ENCODE measurements at regions of chr1 and their contacts with region 1.

Region 1: GRCh38 chr1:21659099-21659923 is 9.8 kb downstream of the RAP1GAP start:
- DNase-seq: peak; percentile 40 to 81
- H3K4me3 ChIP-seq: no peak overlapping the region
- H3K27ac ChIP-seq: no peak overlapping the region
- H3K4me1 ChIP-seq: peaks cover 15% of the 10 kb centered on the region
- H3K27me3 ChIP-seq: no peaks in the 10 kb centered on the region
- CTCF ChIP-seq: peak; percentile 89

Region 2: DNA sequence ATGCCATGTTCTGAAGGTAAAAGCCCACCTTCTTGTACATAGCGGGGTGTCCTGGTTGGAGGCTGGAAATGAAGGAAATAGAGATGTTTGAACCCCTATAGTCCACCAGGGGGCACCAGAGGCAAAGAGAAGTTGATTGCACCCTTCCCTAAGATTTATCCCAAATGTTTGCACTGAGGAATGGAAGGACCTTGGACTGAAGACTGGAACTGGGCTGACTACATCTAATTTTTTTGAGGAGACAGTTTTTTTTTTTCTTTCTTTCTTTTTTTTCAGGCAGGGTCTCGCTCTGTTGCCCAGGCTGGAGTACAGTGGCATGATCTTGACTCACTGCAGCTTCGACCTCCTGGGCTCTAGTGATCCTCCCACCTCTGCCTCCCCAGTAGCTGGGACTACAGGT is 427.3 kb before region 1 on chr1:
- CTCF ChIA-PET with region 1: no interaction called
- POLR2A ChIA-PET with region 1: no interaction called
- intact Hi-C with region 1: loop called (anchors 5 kb)
- DNase-seq: peak in 1 of 2 experiments; percentile 27
- H3K4me3 ChIP-seq: no peak overlapping the region
- H3K27ac ChIP-seq: no peak overlapping the region
- H3K4me1 ChIP-seq: no peaks in the 10 kb centered on the region
- H3K27me3 ChIP-seq: no peaks in the 10 kb centered on the region
- CTCF ChIP-seq: peak; percentile 79

Region 3: DNA sequence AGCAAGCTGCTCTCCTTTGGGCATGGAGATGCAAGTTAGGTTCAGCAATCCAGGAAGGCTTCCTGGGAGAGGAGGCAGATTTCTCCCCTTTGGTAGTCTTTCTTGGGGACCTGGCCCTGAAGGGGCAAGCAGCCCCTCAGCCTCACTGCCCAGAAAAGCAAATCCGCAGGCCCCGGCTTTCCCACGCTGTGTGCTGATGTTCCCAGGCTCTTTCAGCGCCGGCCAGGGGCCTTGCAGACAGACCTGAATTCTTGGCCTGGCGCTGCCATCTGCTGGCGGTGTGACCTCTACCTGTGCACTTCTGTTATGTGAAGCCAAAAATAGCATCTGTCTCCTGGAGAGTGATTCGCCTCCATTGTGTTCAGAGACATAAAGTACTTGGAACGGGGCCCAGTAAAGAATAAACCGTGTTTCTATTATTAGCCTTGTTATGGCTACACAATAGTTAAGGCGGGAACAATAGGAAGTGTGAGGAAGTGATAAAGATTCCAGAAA is 85.3 kb before region 1 on chr1:
- CTCF ChIA-PET with region 1: interaction called, 14 read pairs
- POLR2A ChIA-PET with region 1: no interaction called
- intact Hi-C with region 1: loop called (anchors 1 kb)
- DNase-seq: peak; percentile 42 to 68
- H3K4me3 ChIP-seq: no peak overlapping the region
- H3K27ac ChIP-seq: no peak overlapping the region
- H3K4me1 ChIP-seq: no peaks in the 10 kb centered on the region
- H3K27me3 ChIP-seq: no peaks in the 10 kb centered on the region
- CTCF ChIP-seq: peak; percentile 63

Region 4: DNA sequence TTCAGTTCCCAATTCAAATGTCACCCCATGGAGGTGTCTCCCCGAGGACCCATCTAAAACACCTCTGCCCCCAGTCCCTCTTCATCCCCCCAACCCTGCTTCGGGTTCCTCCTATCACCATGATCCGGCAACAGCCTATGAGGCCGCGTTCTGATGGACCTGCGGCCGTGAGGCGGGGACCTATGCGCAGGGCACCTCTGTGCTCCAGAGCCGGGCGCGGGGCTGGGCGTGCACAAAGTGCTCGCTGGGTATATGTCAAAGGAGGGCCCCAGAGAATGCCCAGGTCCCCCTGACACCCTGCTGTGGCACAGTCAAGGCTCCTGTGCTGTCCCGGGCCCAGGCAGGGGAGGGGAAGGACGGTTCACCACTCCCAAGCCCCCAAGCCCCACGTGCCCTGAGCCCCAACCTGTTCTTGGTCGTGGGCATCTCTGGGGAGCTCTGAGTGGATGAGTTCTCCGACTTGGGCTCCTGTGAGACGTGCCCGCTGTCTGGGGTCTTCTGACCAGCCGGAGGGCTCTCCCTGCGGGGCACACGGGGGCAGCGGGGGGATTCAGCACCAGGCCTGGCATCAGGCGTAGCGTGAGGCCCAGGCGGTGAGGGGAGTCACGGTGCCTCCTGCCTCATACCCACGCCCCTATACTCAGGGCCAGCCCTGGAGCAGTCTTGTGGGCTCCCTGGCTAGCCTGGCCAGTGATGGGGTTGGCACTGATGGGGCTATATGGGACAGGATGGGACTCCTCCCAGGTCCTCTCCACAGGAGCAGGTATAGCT is 57.8 kb before region 1 on chr1:
- CTCF ChIA-PET with region 1: no interaction called
- POLR2A ChIA-PET with region 1: no interaction called
- intact Hi-C with region 1: no loop called
- DNase-seq: no peak
- H3K4me3 ChIP-seq: no peak overlapping the region
- H3K27ac ChIP-seq: no peak overlapping the region
- H3K4me1 ChIP-seq: no peaks in the 10 kb centered on the region
- H3K27me3 ChIP-seq: no peaks in the 10 kb centered on the region
- CTCF ChIP-seq: no peak

Region 5: DNA sequence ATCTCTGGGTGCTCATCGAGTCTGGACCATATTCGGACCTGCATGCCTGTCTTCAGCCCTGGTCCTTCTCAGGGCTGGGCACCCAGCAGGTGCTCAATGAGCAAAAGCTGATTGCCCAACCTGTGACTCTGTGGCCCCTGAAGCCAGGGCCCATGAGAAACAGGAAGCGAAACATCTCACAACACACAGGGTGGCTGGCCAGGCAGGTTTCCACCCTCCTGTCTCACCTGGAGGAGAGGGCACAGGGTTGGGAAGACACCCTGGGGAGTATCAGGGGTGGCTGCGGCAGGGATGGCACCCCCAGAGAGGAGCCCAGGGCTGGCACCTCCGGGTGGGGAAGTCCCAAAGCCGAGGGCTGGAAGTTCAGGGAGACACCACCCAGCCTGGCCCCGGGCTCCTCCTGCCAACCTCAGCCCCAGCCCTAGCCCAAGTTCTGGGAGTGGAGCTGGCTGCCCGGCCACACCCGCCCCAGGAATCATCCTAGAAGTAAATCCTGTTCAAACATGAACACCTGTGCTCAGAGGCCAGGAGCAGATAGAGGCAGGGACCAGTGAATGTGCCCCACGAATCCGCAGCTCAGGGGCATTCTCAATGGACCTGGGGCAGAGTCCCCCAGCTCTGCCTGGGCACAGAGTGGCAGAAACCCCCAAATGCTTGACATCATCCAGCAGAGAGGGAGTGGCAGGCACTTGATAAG is 44.7 kb before region 1 on chr1:
- CTCF ChIA-PET with region 1: no interaction called
- POLR2A ChIA-PET with region 1: no interaction called
- intact Hi-C with region 1: loop called (anchors 5 kb)
- DNase-seq: peak; percentile 38 to 67
- H3K4me3 ChIP-seq: no peak overlapping the region
- H3K27ac ChIP-seq: peak overlapping the region; percentile 58
- H3K4me1 ChIP-seq: peaks cover 16% of the 10 kb centered on the region
- H3K27me3 ChIP-seq: no peaks in the 10 kb centered on the region
- CTCF ChIP-seq: no peak

Region 6: DNA sequence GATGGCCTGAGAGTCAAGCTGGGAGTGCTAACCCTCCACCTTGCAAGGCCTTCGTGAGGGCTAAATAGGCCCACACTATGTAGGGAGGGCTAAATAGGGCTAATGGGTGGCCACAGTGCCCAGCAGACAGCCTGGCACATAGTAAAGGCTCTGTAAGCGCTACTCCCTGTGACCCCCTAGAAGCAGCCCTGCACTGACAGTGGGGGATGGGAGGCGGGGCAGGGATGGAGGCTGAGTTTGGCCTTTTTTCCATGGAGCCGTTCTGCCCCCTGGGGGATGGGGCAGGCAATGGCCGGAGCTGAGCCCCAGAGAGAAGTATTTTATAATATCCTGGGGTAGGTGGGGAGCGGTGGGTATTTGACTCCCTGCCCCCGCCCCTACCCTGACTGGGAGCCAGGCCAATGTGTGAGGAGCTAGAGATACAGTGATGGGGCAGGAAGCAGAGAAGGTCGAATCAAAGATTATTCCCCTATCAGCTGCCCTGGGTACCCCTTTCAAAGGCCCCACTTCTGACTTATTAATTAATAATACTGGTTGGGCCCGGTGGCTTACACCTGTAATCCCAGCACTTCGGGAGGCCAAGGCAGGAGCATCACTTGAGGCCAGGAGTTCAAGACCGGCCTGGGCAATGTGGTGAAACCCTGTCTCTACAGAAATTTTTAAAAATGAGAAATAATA is 1271.1 kb after region 1 on chr1:
- CTCF ChIA-PET with region 1: interaction called, 17 read pairs
- POLR2A ChIA-PET with region 1: no interaction called
- intact Hi-C with region 1: no loop called
- DNase-seq: peak in 1 of 2 experiments; percentile 60
- H3K4me3 ChIP-seq: no peak overlapping the region
- H3K27ac ChIP-seq: no peak overlapping the region
- H3K4me1 ChIP-seq: no peaks in the 10 kb centered on the region
- H3K27me3 ChIP-seq: no peaks in the 10 kb centered on the region
- CTCF ChIP-seq: peak; percentile 80

Measured in PC-9 (cell line).